H1 (cell line): ENCODE measurements at regions of chr18 and their contacts with region 1.

Region 1: GRCh38 chr18:35407871-35408481 is 30.8 kb upstream of the ZNF396 start:
- DNase-seq: no peak
- H3K4me3 ChIP-seq: no peak overlapping the region
- H3K27ac ChIP-seq: no peak overlapping the region
- H3K4me1 ChIP-seq: no peaks in the 10 kb centered on the region
- H3K27me3 ChIP-seq: no peaks in the 10 kb centered on the region
- CTCF ChIP-seq: peak in 2 of 3 experiments; percentile 66 to 72; a peak in 2 of 4 replicates
- EP300 ChIP-seq: no peak
- POLR2A ChIP-seq: no peak
- RAD21 ChIP-seq: peak; percentile 85 to 86

Region 2: DNA sequence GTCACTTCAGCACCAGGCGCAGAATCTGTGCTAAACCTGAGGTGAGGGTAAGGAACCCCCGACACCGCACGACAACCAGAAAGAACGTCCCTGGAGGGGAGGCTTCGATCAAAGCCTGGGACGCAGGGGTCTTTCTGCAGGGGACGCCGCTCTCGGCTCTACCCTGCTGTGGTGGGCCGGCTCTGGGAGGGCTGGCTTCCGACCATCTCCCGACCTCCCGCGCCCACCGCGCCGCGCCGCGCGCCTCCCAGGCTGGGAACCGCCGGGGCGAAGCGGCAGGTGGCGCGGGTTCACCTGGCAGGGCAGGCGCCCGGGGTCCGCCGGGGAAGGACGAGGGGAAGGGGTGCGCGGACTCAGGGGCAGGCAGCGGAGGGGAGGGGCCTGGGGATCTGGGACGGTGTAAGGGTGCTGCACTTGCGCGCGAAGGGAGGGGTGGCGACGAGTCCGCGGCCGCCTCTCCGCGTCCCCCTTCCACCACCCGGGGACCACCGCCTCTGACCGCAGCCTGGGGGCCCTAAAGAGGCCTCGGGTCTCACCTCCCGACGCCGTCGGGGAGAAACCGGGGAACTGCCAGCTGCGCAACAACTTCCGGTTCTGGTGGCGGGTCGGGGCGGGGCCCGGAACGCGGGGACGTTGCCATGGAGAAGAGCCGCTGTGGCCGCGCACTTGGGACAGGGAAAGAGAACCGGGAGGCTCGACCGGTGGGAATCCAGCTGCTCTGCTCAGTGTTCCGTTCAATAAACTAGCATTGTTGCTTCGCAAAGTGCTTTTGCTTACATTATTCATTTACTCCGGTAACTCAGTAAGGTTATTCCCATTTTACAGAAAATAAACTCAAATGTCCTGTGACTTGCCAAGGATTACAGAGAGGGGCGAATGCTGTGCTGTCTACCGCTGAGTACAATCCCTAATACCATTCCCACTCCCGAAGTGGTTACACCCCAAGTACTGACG is 31.0 kb before region 1 on chr18 and contains the start of gene ZNF396:
- CTCF ChIA-PET with region 1: no interaction called
- POLR2A ChIA-PET with region 1: no interaction called
- DNase-seq: peak; percentile 41 to 93
- H3K4me3 ChIP-seq: peak within 1 kb of the TSS; percentile 55 to 80 (median 75)
- H3K27ac ChIP-seq: no peak within 1 kb of the TSS
- H3K4me1 ChIP-seq: peaks cover 0 to 3% (median 1%) of the 10 kb centered on the region in 4 experiments; a peak in 3 of 7 replicates
- H3K27me3 ChIP-seq: peaks cover 0 to 8% (median 4%) of the 10 kb centered on the region in 4 experiments; a peak in 4 of 7 replicates
- CTCF ChIP-seq: no peak
- EP300 ChIP-seq: 0 out of 3 replicates have a peak, but pooled peaks of 1 of the 2 experiments have one; percentile 15
- POLR2A ChIP-seq: no peak
- RAD21 ChIP-seq: no peak
- total RNA-seq, gene ZNF396: 0.74 and 0.94 TPM in 2 replicates

Region 3: DNA sequence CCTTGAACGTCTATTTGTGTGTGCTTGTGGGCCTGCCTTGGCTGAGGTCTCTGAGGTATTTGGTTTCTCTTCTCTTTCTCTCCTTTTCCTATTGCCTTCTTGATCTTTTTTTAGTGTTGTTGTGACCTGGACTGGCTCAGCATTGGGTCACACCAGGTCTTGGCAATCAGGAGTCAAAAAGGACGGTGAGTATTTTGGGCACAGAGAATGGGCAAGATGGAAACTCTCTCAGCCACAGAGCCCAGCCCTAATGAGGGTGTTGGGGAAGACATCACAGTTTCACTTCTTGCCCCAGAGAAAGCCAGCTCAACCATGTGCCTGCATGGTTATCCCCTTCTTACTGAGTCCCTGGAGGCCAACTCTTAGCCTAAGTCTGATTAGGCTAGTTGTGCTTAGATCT is 103.5 kb after region 1 on chr18:
- CTCF ChIA-PET with region 1: interaction called, 15 read pairs
- POLR2A ChIA-PET with region 1: no interaction called
- DNase-seq: peak in 1 of 2 experiments; percentile 29
- H3K4me3 ChIP-seq: no peak overlapping the region
- H3K27ac ChIP-seq: no peak overlapping the region
- H3K4me1 ChIP-seq: peaks cover 0 to 8% (median 6%) of the 10 kb centered on the region in 4 experiments; a peak in 5 of 7 replicates
- H3K27me3 ChIP-seq: no peaks in the 10 kb centered on the region
- CTCF ChIP-seq: no peak
- EP300 ChIP-seq: no peak
- POLR2A ChIP-seq: no peak
- RAD21 ChIP-seq: no peak